H1 (cell line): ENCODE measurements at regions of chr6 and their contacts with region 1.

Region 1: DNA sequence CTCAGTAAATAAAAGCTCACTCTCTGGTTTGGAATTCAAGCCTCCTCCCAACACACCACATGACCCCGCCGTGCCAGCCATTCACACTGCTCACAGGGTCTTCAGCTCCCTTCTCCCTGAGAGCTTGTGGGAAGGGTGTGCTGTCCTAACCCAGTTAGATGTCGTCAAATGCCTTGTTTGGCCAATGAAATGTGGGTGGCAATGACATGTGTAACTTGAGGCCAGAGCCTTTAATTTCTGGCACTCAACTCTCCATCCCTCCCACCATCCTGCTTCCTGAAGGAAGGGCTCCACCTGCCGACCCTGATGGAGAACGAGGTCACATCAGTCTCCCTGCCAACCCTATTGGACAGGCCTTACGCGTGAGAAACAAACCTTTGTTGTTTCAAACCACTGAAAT is 224.5 kb upstream of the AGPAT4 start:
- DNase-seq: peak; percentile 51 to 60
- H3K4me3 ChIP-seq: no peak overlapping the region
- H3K27ac ChIP-seq: no peak overlapping the region
- H3K4me1 ChIP-seq: no peaks in the 10 kb centered on the region
- H3K27me3 ChIP-seq: no peaks in the 10 kb centered on the region
- CTCF ChIP-seq: peak; percentile 68 to 78 (median 72)
- EP300 ChIP-seq: no peak
- POLR2A ChIP-seq: no peak
- RAD21 ChIP-seq: peak; percentile 81 to 82

Region 2: DNA sequence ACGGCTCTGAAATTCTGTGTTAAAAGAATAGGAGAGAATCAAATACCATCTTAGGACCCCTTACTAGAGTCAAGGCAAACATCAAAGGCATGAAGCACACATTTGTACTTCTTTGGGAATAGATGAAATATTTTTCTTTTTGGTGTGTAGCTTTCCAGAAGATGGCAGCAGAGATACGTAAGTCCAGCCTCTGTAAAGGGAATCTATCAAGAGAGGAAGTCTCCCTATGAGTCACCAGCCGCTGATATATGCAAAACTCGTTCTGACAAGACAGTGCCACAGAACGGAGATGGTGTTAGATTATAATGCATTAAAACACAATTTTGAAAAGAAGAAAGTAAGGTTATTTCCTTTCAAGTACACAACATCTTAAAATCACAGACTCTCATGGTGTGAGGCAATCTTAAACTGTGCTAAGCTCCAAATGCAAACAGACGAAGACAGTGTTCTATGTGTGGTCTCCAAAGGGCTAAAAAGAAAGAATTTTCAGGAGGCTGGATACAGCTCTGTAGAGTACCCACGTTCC is 104.5 kb before region 1 on chr6:
- CTCF ChIA-PET with region 1: interaction called, 25 read pairs
- POLR2A ChIA-PET with region 1: no interaction called
- DNase-seq: no peak
- H3K4me3 ChIP-seq: no peak overlapping the region
- H3K27ac ChIP-seq: no peak overlapping the region
- H3K4me1 ChIP-seq: no peaks in the 10 kb centered on the region; a peak in 2 of 7 replicates
- H3K27me3 ChIP-seq: no peaks in the 10 kb centered on the region; a peak in 1 of 7 replicates
- CTCF ChIP-seq: peak in 2 of 3 experiments; percentile 54; a peak in 2 of 4 replicates
- EP300 ChIP-seq: no peak
- POLR2A ChIP-seq: no peak
- RAD21 ChIP-seq: peak; percentile 79 to 83

Region 3: GRCh38 chr6:161400671-161401070 is 97.7 kb before region 1 on chr6:
- CTCF ChIA-PET with region 1: interaction called, 25 read pairs
- POLR2A ChIA-PET with region 1: no interaction called
- DNase-seq: no peak
- H3K4me3 ChIP-seq: no peak overlapping the region
- H3K27ac ChIP-seq: no peak overlapping the region
- H3K4me1 ChIP-seq: no peaks in the 10 kb centered on the region
- H3K27me3 ChIP-seq: no peaks in the 10 kb centered on the region; a peak in 1 of 7 replicates
- CTCF ChIP-seq: no peak
- EP300 ChIP-seq: no peak
- POLR2A ChIP-seq: no peak
- RAD21 ChIP-seq: no peak

Region 4: DNA sequence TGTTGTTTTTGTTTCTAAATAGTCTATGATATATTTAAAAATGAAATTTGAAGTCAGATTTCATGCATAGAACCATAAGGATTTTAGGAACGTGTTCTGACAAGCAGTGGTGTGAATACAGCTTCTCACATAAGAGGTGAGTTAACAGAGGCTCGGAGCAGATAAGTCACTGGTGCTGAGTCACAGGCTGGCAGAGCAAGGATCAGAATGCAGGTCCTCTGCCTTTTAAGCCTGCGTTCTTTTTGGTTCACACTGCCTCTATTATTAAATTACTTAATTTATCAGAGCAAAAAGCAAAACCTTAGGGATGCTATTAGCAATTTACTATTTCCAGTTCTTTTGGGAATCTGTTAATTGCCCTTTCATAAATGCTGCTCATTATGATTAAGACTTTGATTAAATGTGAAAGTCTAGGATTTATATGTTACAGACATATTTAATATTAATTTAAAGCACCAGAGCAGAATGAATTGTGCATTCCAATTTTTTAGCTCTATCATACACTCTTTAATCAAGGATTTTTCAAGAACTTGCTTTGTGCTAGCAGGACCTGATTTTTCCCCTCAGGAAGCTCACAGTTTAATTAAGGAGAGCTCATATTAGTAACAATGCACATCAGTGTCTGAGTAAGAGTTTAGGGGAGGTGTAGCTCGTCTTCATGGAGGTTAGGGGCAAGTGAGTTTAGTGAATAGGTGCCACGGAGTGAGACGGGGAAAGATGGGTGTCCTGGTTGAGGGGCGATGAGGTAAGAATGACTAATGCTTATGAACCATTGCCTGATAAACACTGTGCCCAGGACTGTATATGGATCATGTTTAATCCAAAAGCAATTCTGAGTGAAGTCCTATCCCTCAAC is 11.8 kb before region 1 on chr6:
- CTCF ChIA-PET with region 1: interaction called, 12 read pairs
- POLR2A ChIA-PET with region 1: no interaction called
- DNase-seq: no peak
- H3K4me3 ChIP-seq: no peak overlapping the region
- H3K27ac ChIP-seq: no peak overlapping the region
- H3K4me1 ChIP-seq: no peaks in the 10 kb centered on the region; a peak in 1 of 7 replicates
- H3K27me3 ChIP-seq: no peaks in the 10 kb centered on the region
- CTCF ChIP-seq: no peak
- EP300 ChIP-seq: no peak
- POLR2A ChIP-seq: no peak
- RAD21 ChIP-seq: no peak

Region 5: DNA sequence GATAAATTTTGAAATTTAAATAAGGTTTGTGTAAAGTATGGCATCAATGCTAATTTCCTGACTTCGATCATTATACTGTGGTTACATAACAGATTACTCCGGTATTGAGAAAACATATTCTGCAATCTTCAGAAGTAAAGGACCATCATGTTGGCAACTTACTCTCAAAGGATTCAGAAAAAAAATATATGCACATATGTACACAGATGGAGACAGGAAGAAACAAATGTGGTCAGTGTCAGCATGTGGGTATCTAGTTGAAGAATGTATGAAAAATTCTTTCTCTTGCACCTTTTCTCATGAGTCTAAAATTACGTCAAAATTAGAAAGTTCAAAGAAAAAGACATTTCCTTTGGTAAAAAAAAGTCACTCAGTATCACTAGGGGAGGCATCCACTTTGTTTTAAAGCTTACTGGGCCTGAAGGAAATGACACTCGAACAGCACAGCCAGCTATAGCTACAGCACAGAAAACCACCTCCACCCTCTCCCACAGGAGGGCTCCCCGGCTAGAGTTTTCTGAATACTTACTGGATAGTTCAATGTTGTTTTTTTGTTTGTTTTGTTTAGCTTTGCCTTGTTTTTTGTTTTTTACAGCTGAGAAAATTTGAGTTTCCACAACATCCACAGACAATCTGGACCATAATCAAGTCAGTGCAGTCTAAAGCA is 92.7 kb after region 1 on chr6:
- CTCF ChIA-PET with region 1: no interaction called
- POLR2A ChIA-PET with region 1: no interaction called
- DNase-seq: no peak
- H3K4me3 ChIP-seq: no peak overlapping the region
- H3K27ac ChIP-seq: no peak overlapping the region
- H3K4me1 ChIP-seq: no peaks in the 10 kb centered on the region
- H3K27me3 ChIP-seq: no peaks in the 10 kb centered on the region
- CTCF ChIP-seq: no peak; a peak in 1 of 4 replicates
- EP300 ChIP-seq: no peak
- POLR2A ChIP-seq: no peak
- RAD21 ChIP-seq: 0 out of 4 replicates have a peak, but pooled peaks of 1 of the 2 experiments have one; percentile 3

Region 6: GRCh38 chr6:163122365-163122764 is 1624.0 kb after region 1 on chr6:
- CTCF ChIA-PET with region 1: no interaction called
- POLR2A ChIA-PET with region 1: no interaction called
- DNase-seq: no peak
- H3K4me3 ChIP-seq: no peak overlapping the region; a peak in 1 of 8 replicates
- H3K27ac ChIP-seq: no peak overlapping the region
- H3K4me1 ChIP-seq: peaks cover 0 to 5% (median under 1%) of the 10 kb centered on the region in 4 experiments; a peak in 3 of 7 replicates
- H3K27me3 ChIP-seq: no peaks in the 10 kb centered on the region
- CTCF ChIP-seq: no peak
- EP300 ChIP-seq: no peak
- POLR2A ChIP-seq: no peak
- RAD21 ChIP-seq: no peak